Body of pancreas (tissue), 4 donors: ENCODE measurements at regions of chr20 and their contacts with region 1.

Region 1: DNA sequence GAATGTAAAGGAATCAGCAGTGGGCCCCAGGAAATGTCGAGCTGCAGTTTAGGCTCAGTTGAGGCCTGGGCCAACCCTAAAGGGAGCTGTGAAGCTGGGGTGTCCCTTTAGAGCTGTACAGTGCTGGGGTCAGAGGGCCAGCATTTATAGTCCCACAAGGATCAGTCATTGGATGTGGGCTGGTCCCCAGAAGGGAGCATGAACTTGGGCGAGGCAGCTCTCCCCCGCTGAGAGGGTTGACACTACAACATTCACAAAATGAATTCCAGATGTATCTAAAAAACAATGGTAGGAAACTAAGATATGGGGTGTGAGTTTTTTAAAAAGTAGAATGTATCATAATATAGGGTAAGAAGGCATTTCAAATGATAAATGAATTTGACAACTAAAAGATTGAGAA is 29.7 kb upstream of the TMX4 start:
- DNase-seq: no peak
- ATAC-seq: no peak
- H3K4me3 ChIP-seq: no peak overlapping the region
- H3K27ac ChIP-seq: no peak overlapping the region
- H3K4me1 ChIP-seq: no peaks in the 10 kb centered on the region
- H3K27me3 ChIP-seq: no peaks in the 10 kb centered on the region
- CTCF ChIP-seq: no peak
- POLR2A ChIP-seq: no peak

Region 2: GRCh38 chr20:7703551-7703961 is 345.8 kb before region 1 on chr20:
- intact Hi-C with region 1: no loop called
- DNase-seq: peak in 2 of 4 donors; percentile 5 to 20
- ATAC-seq: no peak
- H3K4me3 ChIP-seq: no peak overlapping the region
- H3K27ac ChIP-seq: no peak overlapping the region
- H3K4me1 ChIP-seq: no peaks in the 10 kb centered on the region
- H3K27me3 ChIP-seq: no peaks in the 10 kb centered on the region
- CTCF ChIP-seq: no peak
- POLR2A ChIP-seq: no peak

Region 3: GRCh38 chr20:8389381-8390036 is 340.2 kb after region 1 on chr20:
- intact Hi-C with region 1: loop called (anchors 10 kb)
- DNase-seq: peak in 1 of 4 donors; percentile 18
- ATAC-seq: peak; percentile 40
- H3K4me3 ChIP-seq: no peak overlapping the region
- H3K27ac ChIP-seq: peak overlapping the region in 3 of 4 donors; percentile 2 to 32 (median 22)
- H3K4me1 ChIP-seq: peaks cover 54% of the 10 kb centered on the region
- H3K27me3 ChIP-seq: no peaks in the 10 kb centered on the region
- CTCF ChIP-seq: peak in 6 of 7 experiments; percentile 39 to 66 (median 56)
- POLR2A ChIP-seq: no peak

Region 4: DNA sequence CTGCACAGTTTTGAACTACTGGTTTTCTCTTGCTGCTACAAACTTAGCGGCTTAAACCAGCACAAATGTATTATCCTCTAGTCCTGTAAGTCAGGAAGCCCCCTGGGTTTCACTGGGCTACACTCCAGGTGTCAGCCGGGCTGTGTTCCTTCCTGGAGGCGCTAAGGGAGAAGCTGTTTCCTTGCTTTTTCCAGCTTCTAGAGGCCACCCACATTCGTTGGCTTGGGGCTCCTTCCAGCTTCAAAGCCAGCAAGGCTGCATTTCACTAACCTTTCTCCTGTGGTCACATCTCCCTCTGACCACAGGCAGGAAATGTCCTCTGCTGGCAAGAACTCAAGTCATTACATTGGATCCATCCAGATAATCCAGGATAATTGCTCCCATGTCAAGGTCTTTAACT is 669.0 kb after region 1 on chr20:
- intact Hi-C with region 1: loop called (anchors 5 kb)
- DNase-seq: peak in 1 of 4 donors; percentile 10
- ATAC-seq: no peak
- H3K4me3 ChIP-seq: no peak overlapping the region
- H3K27ac ChIP-seq: no peak overlapping the region
- H3K4me1 ChIP-seq: no peaks in the 10 kb centered on the region
- H3K27me3 ChIP-seq: no peaks in the 10 kb centered on the region
- CTCF ChIP-seq: no peak
- POLR2A ChIP-seq: no peak

Region 5: GRCh38 chr20:8798505-8798904 is 749.2 kb after region 1 on chr20:
- intact Hi-C with region 1: no loop called
- DNase-seq: peak in 1 of 4 donors; percentile 19
- ATAC-seq: peak; percentile 38
- H3K4me3 ChIP-seq: no peak overlapping the region
- H3K27ac ChIP-seq: no peak overlapping the region
- H3K4me1 ChIP-seq: no peaks in the 10 kb centered on the region
- H3K27me3 ChIP-seq: no peaks in the 10 kb centered on the region
- CTCF ChIP-seq: no peak
- POLR2A ChIP-seq: no peak